ENCODE measurements at regions of chr15 and their contacts with region 1.

Region 1: GRCh38 chr15:51776952-51777574 is 25.7 kb downstream of the TMOD2 start:
- DNase-seq: no peak
- ATAC-seq: peak; percentile 95

Region 2: GRCh38 chr15:51649659-51650521 is 127.2 kb before region 1 on chr15:
- intact Hi-C with region 1: loop called (anchors 2 kb)
- DNase-seq: no peak
- ATAC-seq: peak; percentile 72

Region 3: DNA sequence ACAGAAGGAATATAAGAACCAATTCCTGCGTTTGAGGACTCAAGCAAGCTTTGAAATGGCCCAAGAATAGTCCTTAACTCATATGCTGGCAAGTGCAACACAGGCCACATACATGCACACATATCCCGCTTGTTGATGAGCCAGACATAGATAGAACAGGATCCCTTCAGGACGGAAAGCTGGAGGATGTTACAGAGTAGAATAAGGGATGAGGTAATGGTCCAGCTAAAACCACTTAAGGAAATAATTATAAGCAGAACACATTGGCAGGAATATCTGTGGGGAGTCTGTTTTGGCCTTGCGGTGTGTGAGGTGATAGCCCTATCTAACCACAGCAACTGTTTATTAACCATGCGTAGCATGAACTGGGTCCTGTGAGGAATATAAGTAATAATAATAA is 70.8 kb before region 1 on chr15:
- intact Hi-C with region 1: no loop called
- DNase-seq: no peak
- ATAC-seq: peak; percentile 78

Region 4: DNA sequence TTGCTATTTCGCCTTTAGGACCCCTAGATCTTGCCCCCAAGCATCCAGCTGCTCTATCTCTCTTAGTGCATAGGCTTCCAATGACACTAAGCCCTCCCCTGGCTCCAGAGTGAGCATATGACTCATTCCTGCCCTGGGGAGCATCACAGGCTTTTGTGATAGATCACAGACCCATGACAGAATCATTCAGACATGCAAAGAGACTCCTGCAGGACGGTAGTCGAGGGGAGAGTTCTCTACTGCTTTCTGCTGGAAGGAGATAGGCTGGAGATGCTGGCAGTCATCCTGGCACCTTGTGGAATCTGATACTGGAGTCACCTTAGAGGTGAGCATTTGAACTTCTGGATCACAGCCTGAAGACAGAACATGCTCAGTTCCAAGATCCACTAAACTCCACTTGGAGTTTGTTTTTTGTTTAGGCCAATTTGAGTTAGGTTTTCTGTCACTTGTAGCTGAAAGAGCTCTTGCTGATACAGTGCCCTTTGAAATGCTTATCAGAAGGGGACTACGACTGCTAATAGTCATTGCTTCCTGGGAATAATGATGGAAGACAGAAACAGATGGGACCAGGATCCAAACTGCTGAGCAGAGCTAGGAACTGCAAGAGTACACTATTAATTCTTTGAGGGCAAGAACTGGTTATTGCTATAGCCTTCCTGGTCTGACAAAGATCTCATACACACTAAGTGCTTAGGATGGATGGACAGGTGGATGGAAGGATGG is 50.6 kb before region 1 on chr15:
- intact Hi-C with region 1: loop called (anchors 5 kb)
- DNase-seq: no peak
- ATAC-seq: peak; percentile 99

Region 5: DNA sequence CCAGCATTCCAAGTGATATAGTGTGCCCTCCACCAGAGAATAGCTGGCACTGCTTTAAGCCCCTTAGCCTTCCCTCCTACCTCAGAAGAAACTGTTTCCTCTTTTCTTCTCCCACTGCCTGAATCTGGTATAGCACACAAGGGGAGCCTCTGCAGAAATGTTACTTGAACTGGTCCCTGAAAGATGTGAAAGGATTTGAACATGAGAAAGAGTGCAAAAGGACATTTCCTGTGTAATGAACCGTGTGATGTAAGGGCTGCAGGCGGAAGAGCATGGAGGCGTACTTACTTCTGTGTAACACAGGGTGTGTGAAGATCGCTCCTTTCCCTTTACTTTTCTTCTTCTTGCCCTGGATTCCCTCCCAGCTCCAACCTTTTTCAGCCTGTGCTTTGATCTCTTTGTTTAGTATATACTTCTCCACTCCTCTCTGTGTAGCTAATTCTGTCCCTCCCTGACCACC is 60.8 kb after region 1 on chr15:
- intact Hi-C with region 1: no loop called
- DNase-seq: no peak
- ATAC-seq: peak; percentile 39

Region 6: GRCh38 chr15:52256366-52256765 is 479.3 kb after region 1 on chr15:
- intact Hi-C with region 1: no loop called
- DNase-seq: peak; percentile 50
- ATAC-seq: peak; percentile 62